Posterior cingulate gyrus (tissue), 11 donors: ENCODE measurements at regions of chr11 and their contacts with region 1.

Region 1: DNA sequence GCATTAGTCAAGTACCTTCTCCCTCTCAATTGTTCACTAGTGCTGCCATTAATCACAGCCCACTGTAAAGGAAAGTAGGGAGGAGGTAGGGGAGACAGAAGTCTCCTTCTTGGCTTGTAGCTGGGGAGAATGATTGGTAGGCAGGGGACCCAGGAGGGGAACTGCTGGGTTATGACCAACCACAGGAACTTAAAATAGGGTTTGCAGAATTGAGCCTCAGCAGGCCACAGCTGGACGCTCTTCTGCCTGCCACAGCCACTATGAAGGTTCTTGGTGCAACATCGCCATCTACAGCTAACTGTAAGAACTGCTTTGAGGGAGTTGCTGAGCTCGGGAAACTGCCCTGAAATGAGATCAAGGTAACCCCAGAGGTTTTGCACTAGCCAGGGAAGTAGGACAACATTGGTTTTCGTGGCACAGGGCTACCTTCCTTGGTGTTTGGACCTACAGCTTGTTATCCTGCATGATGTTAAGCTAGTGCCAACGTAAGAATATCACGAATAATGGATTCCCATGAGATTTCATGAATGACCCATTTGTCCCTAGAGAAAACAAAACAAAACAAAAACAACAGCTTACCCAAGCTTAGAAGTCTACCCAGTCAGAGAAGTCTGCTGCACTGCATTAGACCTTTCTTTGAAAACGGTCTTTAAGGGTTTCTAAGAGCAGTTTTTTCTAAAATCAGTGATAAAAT is 787.1 kb upstream of the API5 start:
- DNase-seq: peak in 8 of 10 donors; percentile 11 to 89 (median 58)

Region 2: DNA sequence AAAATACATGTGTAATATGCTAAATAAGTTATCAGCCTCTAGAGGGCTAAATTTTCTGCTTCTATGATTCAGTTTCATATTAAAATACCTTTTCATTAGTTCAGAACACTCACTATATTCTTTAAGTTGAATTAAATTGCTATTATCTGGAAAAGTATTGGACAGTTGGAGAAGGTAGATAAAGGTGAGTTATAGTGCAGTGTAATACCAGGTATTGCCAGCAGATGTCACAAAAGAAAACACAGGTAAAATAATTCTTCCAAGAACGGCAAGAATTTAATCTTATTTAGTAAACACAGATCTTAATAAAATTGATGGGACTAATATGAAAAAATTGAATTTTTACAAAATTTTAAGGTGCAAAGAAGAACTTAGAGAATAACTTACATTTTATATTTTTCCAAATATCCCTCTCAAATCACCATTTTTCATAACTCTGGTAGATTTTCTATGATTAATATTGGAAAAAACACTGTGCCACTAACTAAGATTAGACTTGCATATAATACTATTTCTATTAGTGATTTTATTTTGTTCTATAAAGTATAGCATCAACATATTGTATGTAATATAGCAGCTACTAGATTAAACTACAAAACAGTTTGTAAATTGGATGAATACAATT is 1063.5 kb before region 1 on chr11:
- intact Hi-C with region 1: loop called (anchors 5 kb)
- DNase-seq: no peak

Region 3: DNA sequence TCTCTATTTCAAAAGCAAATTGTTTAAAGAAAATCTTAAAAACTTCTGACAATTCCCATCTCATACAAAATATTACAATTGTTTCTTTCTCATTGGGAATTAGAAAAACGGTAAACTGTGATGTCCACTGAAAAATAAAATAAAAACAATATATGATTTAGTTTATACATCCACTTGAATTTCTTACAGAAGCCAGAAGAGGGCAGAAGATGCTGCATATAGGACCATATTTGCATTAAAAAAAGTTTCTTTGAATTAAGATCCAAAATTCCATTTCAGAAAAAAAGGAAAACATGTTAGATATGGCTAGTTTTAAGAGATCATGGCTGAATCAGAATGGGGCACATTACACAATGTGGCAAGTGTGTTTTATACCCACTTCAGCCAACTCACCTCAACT is 1026.0 kb before region 1 on chr11:
- intact Hi-C with region 1: loop called (anchors 10 kb)
- DNase-seq: no peak

Region 4: GRCh38 chr11:42390116-42390515 is 134.6 kb before region 1 on chr11:
- intact Hi-C with region 1: no loop called
- DNase-seq: no peak

Region 5: GRCh38 chr11:42465623-42466022 is 59.1 kb before region 1 on chr11:
- intact Hi-C with region 1: no loop called
- DNase-seq: no peak